ENCODE measurements at regions of chr5 and their contacts with region 1.

Region 1: GRCh38 chr5:80487829-80488721 is at the start of gene FAM151B:
- DNase-seq: peak in 2 of 4 experiments; percentile 12
- ATAC-seq: peak; percentile 68
- H3K4me3 ChIP-seq: peak within 1 kb of the TSS; percentile 35
- H3K27ac ChIP-seq: no peak within 1 kb of the TSS
- H3K4me1 ChIP-seq: peaks cover 0 to 9% of the 10 kb centered on the region in 2 experiments; a peak in 2 of 5 replicates
- H3K27me3 ChIP-seq: peaks cover 10 to 21% of the 10 kb centered on the region in 2 experiments; a peak in 3 of 5 replicates
- CTCF ChIP-seq: no peak
- EP300 ChIP-seq: no peak
- POLR2A ChIP-seq: no peak
- RAD21 ChIP-seq: no peak
- polyA plus RNA-seq, gene FAM151B: 0.10 TPM in 1 of 2 experiments, not detected in the other

Region 2: GRCh38 chr5:80324912-80325311 is 163.2 kb before region 1 on chr5:
- CTCF ChIA-PET with region 1: no interaction called
- POLR2A ChIA-PET with region 1: no interaction called
- in situ Hi-C with region 1: no loop called
- intact Hi-C with region 1: loop called (anchors 10 kb)
- DNase-seq: no peak
- ATAC-seq: no peak
- H3K4me3 ChIP-seq: no peak overlapping the region
- H3K27ac ChIP-seq: no peak overlapping the region
- H3K4me1 ChIP-seq: no peaks in the 10 kb centered on the region
- H3K27me3 ChIP-seq: peaks cover 5 to 9% of the 10 kb centered on the region in 2 experiments; a peak in 4 of 5 replicates
- CTCF ChIP-seq: no peak
- EP300 ChIP-seq: no peak
- POLR2A ChIP-seq: no peak
- RAD21 ChIP-seq: no peak

Region 3: GRCh38 chr5:80474929-80475328 is 13.1 kb before region 1 on chr5:
- CTCF ChIA-PET with region 1: no interaction called
- POLR2A ChIA-PET with region 1: no interaction called
- in situ Hi-C with region 1: no loop called
- intact Hi-C with region 1: no loop called
- DNase-seq: no peak
- ATAC-seq: no peak
- H3K4me3 ChIP-seq: no peak overlapping the region
- H3K27ac ChIP-seq: no peak overlapping the region
- H3K4me1 ChIP-seq: no peaks in the 10 kb centered on the region
- H3K27me3 ChIP-seq: no peaks in the 10 kb centered on the region
- CTCF ChIP-seq: no peak
- EP300 ChIP-seq: no peak
- POLR2A ChIP-seq: no peak
- RAD21 ChIP-seq: no peak

Region 4: DNA sequence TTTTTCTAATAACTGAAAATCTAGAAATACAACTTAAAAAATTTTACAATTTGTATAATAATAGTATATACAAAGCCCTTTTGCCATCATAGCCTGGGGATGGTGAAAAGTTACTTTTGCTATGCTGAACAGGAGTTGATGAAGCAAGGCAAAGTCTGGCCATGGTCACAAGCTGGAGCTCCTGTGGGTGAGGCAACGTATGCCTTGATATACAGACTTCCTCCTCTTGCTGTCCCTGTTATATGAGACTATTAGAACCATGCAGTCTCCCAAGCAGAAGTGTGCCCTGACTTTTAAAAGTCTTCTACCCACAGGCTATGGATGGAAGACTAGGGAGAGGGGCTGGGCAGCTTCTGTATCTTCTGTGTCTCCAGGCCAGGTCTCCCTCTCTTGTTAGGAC is 15.6 kb after region 1 on chr5:
- CTCF ChIA-PET with region 1: no interaction called
- POLR2A ChIA-PET with region 1: no interaction called
- in situ Hi-C with region 1: no loop called
- intact Hi-C with region 1: no loop called
- DNase-seq: no peak
- ATAC-seq: no peak
- H3K4me3 ChIP-seq: no peak overlapping the region
- H3K27ac ChIP-seq: no peak overlapping the region
- H3K4me1 ChIP-seq: no peaks in the 10 kb centered on the region
- H3K27me3 ChIP-seq: peaks cover 3 to 11% of the 10 kb centered on the region in 2 experiments; a peak in 3 of 5 replicates
- CTCF ChIP-seq: no peak
- EP300 ChIP-seq: no peak
- POLR2A ChIP-seq: no peak
- RAD21 ChIP-seq: no peak

Region 5: DNA sequence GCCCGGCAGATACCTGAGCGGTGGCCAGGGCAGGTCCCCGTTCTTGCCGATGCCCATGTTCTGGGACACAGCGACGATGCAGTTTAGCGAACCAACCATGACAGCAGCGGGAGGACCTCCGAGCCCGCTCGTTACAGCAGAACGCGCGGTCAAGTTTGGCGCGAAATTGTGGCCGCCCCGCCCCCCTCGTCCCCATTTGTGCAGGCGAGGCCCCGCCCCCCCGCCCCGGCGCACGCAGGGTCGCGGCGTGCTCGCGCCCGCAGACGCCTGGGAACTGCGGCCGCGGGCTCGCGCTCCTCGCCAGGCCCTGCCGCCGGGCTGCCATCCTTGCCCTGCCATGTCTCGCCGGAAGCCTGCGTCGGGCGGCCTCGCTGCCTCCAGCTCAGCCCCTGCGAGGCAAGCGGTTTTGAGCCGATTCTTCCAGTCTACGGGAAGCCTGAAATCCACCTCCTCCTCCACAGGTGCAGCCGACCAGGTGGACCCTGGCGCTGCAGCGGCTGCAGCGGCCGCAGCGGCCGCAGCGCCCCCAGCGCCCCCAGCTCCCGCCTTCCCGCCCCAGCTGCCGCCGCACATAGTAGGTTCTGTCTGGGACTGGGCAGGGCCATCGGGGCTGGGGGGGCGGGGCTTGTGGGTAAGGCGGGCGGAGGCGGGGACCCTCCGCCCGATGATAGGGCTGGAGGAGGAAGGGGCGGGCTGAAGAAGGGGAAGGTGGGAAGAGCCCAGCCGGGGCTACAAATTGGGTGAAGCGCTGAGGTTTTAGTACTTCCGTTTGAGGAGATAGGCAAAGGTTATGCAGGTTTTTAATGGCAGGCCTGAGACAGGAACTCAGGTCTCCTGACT is 166.5 kb after region 1 on chr5 and contains the starts of genes DHFR and MSH3:
- CTCF ChIA-PET with region 1: no interaction called
- POLR2A ChIA-PET with region 1: no interaction called
- in situ Hi-C with region 1: no loop called
- intact Hi-C with region 1: loop called (anchors 5 kb)
- DNase-seq: peak; percentile 95 to 97 (median 96)
- ATAC-seq: peak; percentile 76
- H3K4me3 ChIP-seq: peak within 1 kb of the TSS; percentile 61
- H3K27ac ChIP-seq: peak within 1 kb of the TSS; percentile 92
- H3K4me1 ChIP-seq: peaks cover 0 to 8% of the 10 kb centered on the region in 2 experiments; a peak in 2 of 5 replicates
- H3K27me3 ChIP-seq: no peaks in the 10 kb centered on the region
- CTCF ChIP-seq: peak in 2 of 3 experiments; percentile 30 to 44; a peak in 3 of 6 replicates
- EP300 ChIP-seq: no peak
- POLR2A ChIP-seq: peak; percentile 90
- RAD21 ChIP-seq: 0 out of 4 replicates have a peak, but pooled peaks of 1 of the 2 experiments have one; percentile 5
- polyA plus RNA-seq, gene DHFR: 45.6 to 80.6 TPM
- polyA plus RNA-seq, gene MSH3: 3.9 to 5.3 TPM

Region 6: DNA sequence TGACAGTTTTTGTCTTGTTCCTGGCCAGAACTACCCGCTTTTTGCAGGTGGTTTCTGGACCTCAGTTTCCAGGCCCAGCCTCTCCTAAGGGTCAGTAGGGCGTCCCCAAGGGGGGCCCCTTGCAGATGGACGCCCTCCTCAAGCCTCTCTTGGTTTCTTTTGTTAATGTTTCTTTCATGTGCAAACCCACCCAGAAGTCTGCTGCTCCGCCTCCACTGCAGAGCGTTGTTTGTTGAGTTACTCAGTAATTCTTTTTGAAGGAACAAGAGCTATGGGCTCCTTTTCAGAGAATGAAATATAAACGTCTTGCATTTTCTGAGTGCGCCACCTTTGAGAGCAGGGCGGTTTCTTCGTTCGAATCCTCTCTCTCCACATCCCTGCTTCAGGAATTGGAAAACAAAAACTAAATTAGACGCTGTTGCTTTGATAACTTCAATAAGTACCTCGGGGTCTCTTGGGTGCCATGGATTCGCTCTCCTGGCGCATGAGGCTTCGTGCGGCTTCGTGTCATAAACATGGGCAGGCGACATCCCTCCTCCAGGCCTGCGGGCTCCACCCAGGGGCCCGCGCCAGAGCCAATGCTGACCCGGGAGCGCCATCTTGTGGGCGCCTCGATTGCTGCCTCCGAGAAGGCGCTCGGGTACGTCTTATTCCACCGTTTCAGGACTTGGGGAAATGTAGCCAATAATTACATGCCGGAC is 706.7 kb after region 1 on chr5:
- CTCF ChIA-PET with region 1: no interaction called
- POLR2A ChIA-PET with region 1: no interaction called
- in situ Hi-C with region 1: no loop called
- intact Hi-C with region 1: loop called (anchors 10 kb)
- DNase-seq: peak; percentile 87 to 88 (median 88)
- ATAC-seq: peak; percentile 100
- H3K4me3 ChIP-seq: no peak overlapping the region
- H3K27ac ChIP-seq: no peak overlapping the region
- H3K4me1 ChIP-seq: peaks cover 4% of the 10 kb centered on the region in 2 experiments; a peak in 4 of 5 replicates
- H3K27me3 ChIP-seq: peaks cover 18 to 42% of the 10 kb centered on the region in 2 experiments
- CTCF ChIP-seq: peak; percentile 93 to 95 (median 93)
- EP300 ChIP-seq: no peak
- POLR2A ChIP-seq: no peak
- RAD21 ChIP-seq: peak; percentile 92